CD8-positive, alpha-beta T cell (primary cell): ENCODE measurements at regions of chr6 and their contacts with region 1.

Region 1: DNA sequence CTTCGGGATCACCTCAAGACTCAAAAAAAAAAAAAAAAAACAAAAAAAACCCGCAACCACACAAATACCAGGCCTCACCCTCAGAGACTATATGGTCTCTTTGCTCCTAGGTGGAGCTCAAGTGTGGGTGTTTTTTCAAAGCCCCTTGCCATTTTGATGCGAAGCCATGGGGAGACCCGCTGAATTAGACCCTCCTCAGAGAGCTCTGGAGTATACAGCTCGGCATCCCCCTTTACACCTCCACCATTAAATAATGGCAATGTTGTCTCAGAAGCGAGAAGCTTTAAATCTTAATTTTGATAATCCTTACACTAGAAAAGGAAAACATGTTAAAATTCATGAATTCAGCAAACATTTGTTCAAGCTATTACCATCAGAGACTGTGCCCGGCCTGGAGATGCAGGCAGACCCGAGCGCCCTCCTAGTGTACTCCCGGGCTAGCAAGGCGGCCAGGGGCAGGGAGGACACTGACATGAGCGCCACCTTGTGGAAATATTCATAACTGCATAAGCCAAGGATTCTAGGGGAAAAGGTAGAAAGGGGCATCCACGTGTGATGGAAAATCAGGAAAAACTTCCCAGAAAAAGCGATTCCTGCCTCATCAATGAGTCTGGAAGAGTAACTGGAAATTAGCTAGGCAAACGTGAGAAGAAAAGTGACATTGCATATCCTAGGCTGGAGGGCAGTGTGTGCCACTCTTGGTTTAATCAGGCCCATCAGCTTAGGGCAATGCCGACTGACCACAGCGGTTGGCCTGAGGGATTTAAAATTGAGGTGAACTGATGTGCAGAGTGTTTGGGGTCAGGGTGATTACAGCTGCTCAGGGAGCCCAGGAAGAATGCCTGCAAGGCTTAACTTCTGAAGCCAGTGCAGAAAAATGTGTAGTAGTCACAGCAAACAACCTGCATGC is 72.5 kb downstream of the B3GAT2 start:
- DNase-seq: peak; percentile 12 to 68 (median 55)
- ATAC-seq: peak; percentile 89
- H3K4me3 ChIP-seq: no peak overlapping the region
- H3K4me3 Mint-ChIP-seq: no peak overlapping the region
- H3K27ac ChIP-seq: no peak overlapping the region
- H3K27ac Mint-ChIP-seq: no peak overlapping the region
- H3K4me1 ChIP-seq: no peaks in the 10 kb centered on the region
- H3K4me1 Mint-ChIP-seq: no peaks in the 10 kb centered on the region
- H3K27me3 ChIP-seq: peaks cover 0 to 2% of the 10 kb centered on the region in 2 experiments
- H3K27me3 Mint-ChIP-seq: peaks cover 21% of the 10 kb centered on the region
- CTCF ChIP-seq: peak; percentile 95

Region 2: DNA sequence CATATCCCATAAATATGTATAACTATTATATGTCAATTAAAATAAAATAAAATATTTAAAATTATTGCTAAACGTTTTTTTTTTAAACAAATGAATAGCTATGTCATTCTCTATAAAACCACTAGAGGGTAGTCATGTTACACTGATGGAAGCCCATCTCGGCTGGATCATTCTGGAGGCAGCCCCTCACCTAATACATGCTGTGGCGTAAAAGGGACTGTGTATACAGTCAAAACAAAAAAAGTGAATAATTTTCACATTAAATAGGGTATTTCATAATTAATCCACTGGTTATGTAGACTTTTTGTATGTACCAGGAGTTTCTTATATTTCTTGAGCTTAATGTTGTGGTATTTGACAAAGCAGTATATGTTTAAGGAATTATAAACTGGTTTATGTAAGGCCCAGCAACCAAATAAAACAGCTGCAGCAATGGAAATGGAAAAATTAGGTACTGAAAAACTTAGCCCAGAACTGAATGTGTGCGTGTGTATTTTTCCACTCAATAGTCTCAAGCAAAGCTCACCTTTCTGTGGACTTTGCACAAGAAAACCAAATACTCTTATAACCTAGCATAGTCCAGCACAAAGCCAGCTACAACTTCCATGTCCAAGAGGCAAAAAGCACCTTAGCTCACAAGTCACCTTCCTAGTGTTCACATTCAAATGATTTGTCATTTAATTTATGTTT is 663.2 kb before region 1 on chr6:
- CTCF ChIA-PET with region 1: interaction called, 4 read pairs
- POLR2A ChIA-PET with region 1: no interaction called
- intact Hi-C with region 1: loop called (anchors 5 to 10 kb)
- DNase-seq: peak in 2 of 9 experiments; percentile 17 to 32
- ATAC-seq: peak; percentile 49
- H3K4me3 ChIP-seq: no peak overlapping the region
- H3K4me3 Mint-ChIP-seq: no peak overlapping the region
- H3K27ac ChIP-seq: no peak overlapping the region
- H3K27ac Mint-ChIP-seq: no peak overlapping the region
- H3K4me1 ChIP-seq: no peaks in the 10 kb centered on the region
- H3K4me1 Mint-ChIP-seq: no peaks in the 10 kb centered on the region
- H3K27me3 ChIP-seq: no peaks in the 10 kb centered on the region
- H3K27me3 Mint-ChIP-seq: peaks cover 18% of the 10 kb centered on the region
- CTCF ChIP-seq: peak; percentile 88

Region 3: DNA sequence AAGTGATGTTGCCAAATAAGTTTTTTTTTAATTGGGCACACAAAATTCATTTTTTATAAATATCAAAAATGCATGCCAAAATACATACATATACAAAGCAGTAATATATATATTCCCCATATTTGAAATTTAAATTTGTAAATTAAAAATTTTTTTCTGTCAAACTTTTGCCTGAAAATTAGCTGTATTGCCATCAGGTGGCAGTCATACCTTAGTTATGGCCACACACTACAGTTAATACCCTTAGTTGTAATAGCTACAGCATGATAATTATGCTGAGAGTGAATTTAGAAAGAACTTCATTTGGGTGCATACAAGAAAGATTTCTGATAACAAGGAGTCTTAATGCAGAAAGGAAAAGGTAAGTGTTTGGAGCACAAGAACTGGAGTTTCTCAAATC is 363.8 kb before region 1 on chr6:
- CTCF ChIA-PET with region 1: interaction called, 15 read pairs
- POLR2A ChIA-PET with region 1: no interaction called
- intact Hi-C with region 1: loop called (anchors 1 kb)
- DNase-seq: peak in 2 of 9 experiments; percentile 36 to 46
- ATAC-seq: no peak
- H3K4me3 ChIP-seq: no peak overlapping the region
- H3K4me3 Mint-ChIP-seq: no peak overlapping the region
- H3K27ac ChIP-seq: no peak overlapping the region
- H3K27ac Mint-ChIP-seq: no peak overlapping the region
- H3K4me1 ChIP-seq: no peaks in the 10 kb centered on the region
- H3K4me1 Mint-ChIP-seq: peaks cover 7% of the 10 kb centered on the region
- H3K27me3 ChIP-seq: no peaks in the 10 kb centered on the region
- H3K27me3 Mint-ChIP-seq: no peaks in the 10 kb centered on the region
- CTCF ChIP-seq: peak; percentile 38

Region 4: DNA sequence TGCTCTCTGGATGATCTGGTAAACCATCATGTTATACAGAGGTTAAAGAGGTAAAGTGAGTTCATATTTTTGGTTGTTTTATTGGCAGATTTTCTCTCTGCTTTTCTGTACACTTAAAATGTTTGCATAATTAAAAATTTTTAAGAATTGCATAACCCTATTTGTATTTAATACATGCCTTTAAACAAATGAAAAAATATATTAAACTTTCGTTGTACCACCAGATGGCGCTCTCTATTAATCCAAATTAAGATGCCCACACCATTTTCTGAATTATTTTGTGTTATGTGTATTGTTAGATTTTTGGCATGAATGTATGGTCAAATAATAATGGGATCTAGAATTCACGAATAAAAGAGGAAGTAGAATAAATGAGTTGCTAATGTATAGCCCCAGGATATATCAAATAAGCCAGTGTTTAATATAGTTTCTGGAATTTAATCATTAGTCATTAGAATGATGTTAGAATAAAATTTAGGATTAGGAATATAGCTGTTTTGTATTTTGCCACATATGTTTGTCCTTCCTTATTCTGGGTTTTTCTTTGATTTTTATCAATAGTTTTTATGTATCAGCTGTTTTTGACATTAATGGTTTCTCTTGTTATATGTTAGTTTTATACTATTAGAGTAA is 177.7 kb before region 1 on chr6:
- CTCF ChIA-PET with region 1: interaction called, 127 read pairs
- POLR2A ChIA-PET with region 1: interaction called, 3 read pairs
- intact Hi-C with region 1: loop called (anchors 1 kb)
- DNase-seq: peak in 3 of 9 experiments; percentile 20 to 67 (median 58)
- ATAC-seq: no peak
- H3K4me3 ChIP-seq: no peak overlapping the region
- H3K4me3 Mint-ChIP-seq: no peak overlapping the region
- H3K27ac ChIP-seq: no peak overlapping the region
- H3K27ac Mint-ChIP-seq: no peak overlapping the region
- H3K4me1 ChIP-seq: peaks cover 5% of the 10 kb centered on the region
- H3K4me1 Mint-ChIP-seq: peaks cover 41% of the 10 kb centered on the region
- H3K27me3 ChIP-seq: no peaks in the 10 kb centered on the region
- H3K27me3 Mint-ChIP-seq: no peaks in the 10 kb centered on the region
- CTCF ChIP-seq: peak; percentile 90

Region 5: DNA sequence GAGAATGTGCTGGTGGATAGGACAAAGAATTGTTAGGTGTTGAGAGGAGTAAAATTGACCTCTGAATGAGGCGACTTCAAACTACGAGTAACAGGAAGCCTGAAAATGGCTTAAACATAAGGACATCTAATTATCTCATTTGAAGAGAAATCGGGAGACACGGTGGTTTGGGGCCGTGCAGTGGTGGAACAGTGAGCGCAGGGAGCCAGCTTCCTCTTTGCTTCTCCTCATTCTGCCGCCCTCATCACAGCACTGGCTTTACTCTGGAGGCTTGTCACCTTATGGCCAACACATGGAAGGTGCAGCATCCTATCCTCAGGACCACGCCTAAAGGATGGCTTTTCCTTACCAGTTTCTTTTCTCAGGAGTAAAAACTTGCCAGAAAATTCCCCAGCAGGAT is 41.8 kb before region 1 on chr6:
- CTCF ChIA-PET with region 1: interaction called, 5 read pairs
- POLR2A ChIA-PET with region 1: no interaction called
- intact Hi-C with region 1: loop called in 1 of 2 experiments (anchors 1 kb)
- DNase-seq: no peak
- ATAC-seq: no peak
- H3K4me3 ChIP-seq: no peak overlapping the region
- H3K4me3 Mint-ChIP-seq: no peak overlapping the region
- H3K27ac ChIP-seq: no peak overlapping the region
- H3K27ac Mint-ChIP-seq: no peak overlapping the region
- H3K4me1 ChIP-seq: no peaks in the 10 kb centered on the region
- H3K4me1 Mint-ChIP-seq: peaks cover 14% of the 10 kb centered on the region
- H3K27me3 ChIP-seq: no peaks in the 10 kb centered on the region
- H3K27me3 Mint-ChIP-seq: no peaks in the 10 kb centered on the region
- CTCF ChIP-seq: no peak

Region 6: DNA sequence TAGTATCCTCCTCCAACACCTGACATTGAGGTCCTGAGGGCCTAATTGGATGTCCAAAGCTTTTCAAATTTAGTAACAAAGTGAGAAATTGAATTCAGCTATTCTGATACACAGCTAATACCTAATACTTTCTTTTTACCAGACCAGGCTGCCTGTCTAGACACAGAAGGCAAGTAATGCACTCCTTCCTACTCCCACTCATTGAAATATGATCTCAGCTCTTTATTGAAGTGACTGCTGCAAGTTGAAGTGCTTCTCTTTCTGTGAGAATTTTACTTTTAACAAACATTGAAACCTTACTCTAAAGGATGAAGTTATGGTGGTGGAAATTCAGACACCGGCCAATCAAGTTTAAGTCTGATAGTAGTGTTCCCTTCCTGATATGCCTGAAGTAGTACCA is 313.5 kb after region 1 on chr6:
- CTCF ChIA-PET with region 1: no interaction called
- POLR2A ChIA-PET with region 1: no interaction called
- intact Hi-C with region 1: no loop called
- DNase-seq: no peak
- ATAC-seq: no peak
- H3K4me3 ChIP-seq: no peak overlapping the region
- H3K4me3 Mint-ChIP-seq: no peak overlapping the region
- H3K27ac ChIP-seq: no peak overlapping the region
- H3K27ac Mint-ChIP-seq: no peak overlapping the region
- H3K4me1 ChIP-seq: no peaks in the 10 kb centered on the region
- H3K4me1 Mint-ChIP-seq: no peaks in the 10 kb centered on the region
- H3K27me3 ChIP-seq: no peaks in the 10 kb centered on the region
- H3K27me3 Mint-ChIP-seq: no peaks in the 10 kb centered on the region
- CTCF ChIP-seq: no peak